Psoas muscle (tissue), 8 donors: ENCODE measurements at regions of chr3 and their contacts with region 1.

Region 1: DNA sequence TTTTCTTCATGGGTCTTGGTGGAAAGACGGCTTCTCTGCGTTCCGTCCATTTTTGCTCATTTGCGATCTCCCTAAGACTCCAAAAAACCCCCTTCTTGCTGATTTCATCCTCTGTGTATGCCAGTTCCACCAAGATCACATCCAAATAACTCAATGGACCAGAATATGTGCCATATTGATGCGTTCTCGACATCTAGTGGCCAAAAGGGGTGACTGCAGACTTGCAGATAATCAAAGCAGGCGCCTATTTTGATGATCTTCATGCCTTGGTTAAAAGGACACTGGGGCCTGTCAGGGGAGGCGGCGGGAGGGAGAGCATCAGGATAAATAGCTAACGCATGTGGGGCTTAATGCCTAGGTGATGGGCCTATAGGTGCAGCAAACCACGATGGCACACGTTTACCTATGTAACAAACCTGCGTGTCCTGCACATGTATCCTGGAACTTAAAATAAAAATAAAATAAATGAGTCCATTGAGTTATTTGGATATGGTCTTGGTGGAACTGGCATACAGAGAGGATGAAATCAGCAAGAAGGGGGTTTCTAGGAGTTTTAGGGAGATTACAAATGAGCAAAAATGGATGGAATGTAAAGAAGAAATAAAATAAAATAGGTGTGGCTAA is 104.2 kb upstream of the RAD18 start:
- DNase-seq: peak in 1 of 2 donors; percentile 33
- ATAC-seq: peak; percentile 67 to 93 (median 76)
- H3K4me3 ChIP-seq: no peak overlapping the region
- H3K27ac ChIP-seq: no peak overlapping the region
- H3K4me1 ChIP-seq: no peaks in the 10 kb centered on the region
- H3K27me3 ChIP-seq: no peaks in the 10 kb centered on the region
- CTCF ChIP-seq: peak; percentile 95

Region 2: DNA sequence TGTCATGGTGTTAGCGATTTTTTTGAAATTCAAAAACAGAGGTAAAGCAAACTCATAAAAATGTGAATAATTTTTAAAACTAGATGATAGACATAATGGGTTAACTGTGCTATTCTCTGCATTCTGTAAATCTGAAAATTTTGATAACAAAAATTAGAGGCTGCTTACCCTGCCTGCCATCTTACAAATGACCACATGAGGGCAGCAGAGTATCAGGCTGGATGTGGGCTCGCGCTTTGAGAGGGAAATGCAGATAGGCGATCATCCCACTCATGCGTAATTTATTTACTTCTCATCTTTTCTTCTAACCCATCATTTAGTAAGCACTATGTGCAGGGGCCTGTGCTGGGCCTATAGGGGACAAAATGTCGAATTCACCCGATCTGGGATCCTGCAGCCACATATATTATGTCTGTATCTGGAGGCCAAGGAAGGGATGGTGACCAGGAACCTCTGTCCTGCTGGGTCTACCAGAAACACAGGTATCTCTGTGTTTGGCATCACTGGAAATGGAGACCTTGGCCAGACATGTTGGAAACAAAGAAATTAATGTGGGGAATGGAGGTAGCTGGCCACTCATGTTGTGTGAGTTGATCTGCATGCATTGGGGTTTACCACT is 96.4 kb before region 1 on chr3:
- intact Hi-C with region 1: loop called (anchors 1 to 5 kb)
- DNase-seq: no peak
- ATAC-seq: peak; percentile 69 to 91 (median 79)
- H3K4me3 ChIP-seq: no peak overlapping the region
- H3K27ac ChIP-seq: no peak overlapping the region
- H3K4me1 ChIP-seq: no peaks in the 10 kb centered on the region
- H3K27me3 ChIP-seq: peaks cover 0 to 4% (median 0%) of the 10 kb centered on the region in 3 donors
- CTCF ChIP-seq: peak; percentile 99

Region 3: DNA sequence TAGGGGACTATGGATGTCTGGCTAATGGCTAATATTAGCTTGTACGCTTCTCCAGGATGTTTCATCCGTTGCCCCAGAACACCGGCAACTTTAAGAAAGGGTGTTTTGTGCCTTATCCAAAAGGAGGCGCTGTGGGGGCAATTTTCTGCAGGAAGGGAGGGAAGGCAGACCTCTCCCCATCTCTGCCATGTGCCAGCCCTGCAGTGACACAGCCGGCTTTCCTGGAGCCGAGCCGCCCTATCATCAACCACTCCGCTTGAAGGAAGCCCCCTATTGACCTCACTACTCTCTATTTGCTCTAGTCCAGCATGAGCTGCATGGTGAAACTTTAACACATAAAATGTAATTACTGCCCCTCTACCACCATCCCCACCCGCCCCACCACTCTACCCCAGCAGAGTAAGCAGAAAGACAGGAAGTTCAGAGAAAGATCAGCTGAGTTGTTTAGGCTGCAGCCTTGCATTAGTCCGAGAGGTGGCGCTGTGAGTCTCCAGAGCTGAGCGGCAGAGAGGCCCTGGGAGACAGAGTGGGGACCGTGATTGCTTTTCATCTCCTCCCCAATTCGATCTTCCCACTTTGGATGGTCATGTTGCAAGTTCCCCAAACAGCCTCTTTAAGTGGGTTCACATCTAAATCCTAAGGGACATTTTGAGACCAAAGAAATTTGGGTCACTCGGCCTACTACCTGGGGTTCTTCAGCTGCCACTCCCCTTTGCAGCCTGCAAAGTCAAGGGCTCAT is 79.7 kb before region 1 on chr3:
- intact Hi-C with region 1: loop called (anchors 2 to 5 kb)
- DNase-seq: peak; percentile 59 to 75
- ATAC-seq: peak; percentile 70 to 89 (median 76)
- H3K4me3 ChIP-seq: no peak overlapping the region
- H3K27ac ChIP-seq: no peak overlapping the region
- H3K4me1 ChIP-seq: no peaks in the 10 kb centered on the region
- H3K27me3 ChIP-seq: no peaks in the 10 kb centered on the region
- CTCF ChIP-seq: peak; percentile 66

Region 4: GRCh38 chr3:9022305-9023225 is 44.9 kb before region 1 on chr3:
- intact Hi-C with region 1: no loop called
- DNase-seq: no peak
- ATAC-seq: no peak
- H3K4me3 ChIP-seq: no peak overlapping the region
- H3K27ac ChIP-seq: no peak overlapping the region
- H3K4me1 ChIP-seq: peaks cover 2% of the 10 kb centered on the region
- H3K27me3 ChIP-seq: no peaks in the 10 kb centered on the region
- CTCF ChIP-seq: no peak